Posterior cingulate gyrus (tissue), 11 donors: ENCODE measurements at regions of chr6 and their contacts with region 1.

Region 1: GRCh38 chr6:26122793-26123674 is 35.8 kb downstream of the HFE start:
- DNase-seq: peak; percentile 74 to 97 (median 88)

Region 2: DNA sequence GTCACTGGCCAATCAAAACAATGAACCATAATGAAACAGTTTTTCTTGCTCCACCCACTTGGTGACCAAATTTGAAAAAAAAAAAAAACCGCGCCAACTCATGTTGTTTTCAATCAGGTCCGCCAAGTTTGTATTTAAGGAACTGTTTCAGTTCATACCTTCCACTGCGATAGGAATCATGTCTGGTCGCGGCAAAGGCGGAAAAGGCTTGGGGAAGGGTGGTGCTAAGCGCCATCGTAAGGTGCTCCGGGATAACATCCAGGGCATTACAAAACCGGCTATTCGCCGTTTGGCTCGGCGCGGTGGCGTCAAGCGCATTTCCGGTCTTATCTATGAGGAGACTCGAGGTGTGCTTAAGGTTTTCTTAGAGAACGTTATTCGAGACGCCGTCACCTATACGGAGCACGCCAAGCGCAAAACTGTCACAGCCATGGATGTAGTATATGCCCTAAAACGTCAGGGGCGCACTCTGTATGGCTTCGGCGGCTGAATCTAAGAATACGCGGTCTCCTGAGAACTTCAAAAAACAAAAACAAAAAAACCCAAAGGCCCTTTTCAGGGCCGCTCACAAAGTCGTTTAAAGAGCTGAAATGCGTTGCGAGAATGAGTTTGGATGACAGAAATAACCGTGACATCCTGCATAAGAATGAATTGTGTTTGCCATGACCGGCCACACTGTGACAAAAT is 19.1 kb before region 1 on chr6:
- intact Hi-C with region 1: loop called (anchors 2 kb)
- DNase-seq: peak; percentile 77 to 97 (median 85)

Region 3: GRCh38 chr6:26141378-26141904 is 18.4 kb after region 1 on chr6:
- intact Hi-C with region 1: loop called (anchors 2 kb)
- DNase-seq: peak; percentile 56 to 96 (median 68)

Region 4: GRCh38 chr6:26156076-26156849 is 33.2 kb after region 1 on chr6:
- intact Hi-C with region 1: loop called (anchors 1 kb)
- DNase-seq: peak; percentile 81 to 98 (median 89)

Region 5: GRCh38 chr6:26196846-26197648 is 74.0 kb after region 1 on chr6:
- intact Hi-C with region 1: loop called (anchors 5 kb)
- DNase-seq: peak; percentile 52 to 96 (median 78)